ENCODE measurements at regions of chr16 and their contacts with region 1.

Region 1: GRCh38 chr16:57648590-57649442 is 19.3 kb upstream of the ADGRG3 start:
- DNase-seq: peak; percentile 93
- H3K4me3 ChIP-seq: peak overlapping the region in 1 of 2 experiments; percentile 52; a peak in 1 of 4 replicates
- H3K27ac ChIP-seq: no peak overlapping the region
- H3K4me1 ChIP-seq: peaks cover 0 to 4% of the 10 kb centered on the region in 2 experiments; a peak in 1 of 4 replicates
- H3K27me3 ChIP-seq: no peaks in the 10 kb centered on the region
- CTCF ChIP-seq: peak; percentile 100
- EP300 ChIP-seq: no peak
- RAD21 ChIP-seq: peak; percentile 96

Region 2: GRCh38 chr16:57300387-57301125 is 348.3 kb before region 1 on chr16:
- CTCF ChIA-PET with region 1: no interaction called
- POLR2A ChIA-PET with region 1: no interaction called
- DNase-seq: peak; percentile 93
- H3K4me3 ChIP-seq: peak overlapping the region; percentile 56 to 62
- H3K27ac ChIP-seq: peak overlapping the region; percentile 76 to 87
- H3K4me1 ChIP-seq: peaks cover 0 to 7% of the 10 kb centered on the region in 2 experiments; a peak in 1 of 4 replicates
- H3K27me3 ChIP-seq: no peaks in the 10 kb centered on the region
- CTCF ChIP-seq: peak; percentile 97
- EP300 ChIP-seq: no peak; a peak in 1 of 4 replicates
- RAD21 ChIP-seq: peak; percentile 100

Region 3: DNA sequence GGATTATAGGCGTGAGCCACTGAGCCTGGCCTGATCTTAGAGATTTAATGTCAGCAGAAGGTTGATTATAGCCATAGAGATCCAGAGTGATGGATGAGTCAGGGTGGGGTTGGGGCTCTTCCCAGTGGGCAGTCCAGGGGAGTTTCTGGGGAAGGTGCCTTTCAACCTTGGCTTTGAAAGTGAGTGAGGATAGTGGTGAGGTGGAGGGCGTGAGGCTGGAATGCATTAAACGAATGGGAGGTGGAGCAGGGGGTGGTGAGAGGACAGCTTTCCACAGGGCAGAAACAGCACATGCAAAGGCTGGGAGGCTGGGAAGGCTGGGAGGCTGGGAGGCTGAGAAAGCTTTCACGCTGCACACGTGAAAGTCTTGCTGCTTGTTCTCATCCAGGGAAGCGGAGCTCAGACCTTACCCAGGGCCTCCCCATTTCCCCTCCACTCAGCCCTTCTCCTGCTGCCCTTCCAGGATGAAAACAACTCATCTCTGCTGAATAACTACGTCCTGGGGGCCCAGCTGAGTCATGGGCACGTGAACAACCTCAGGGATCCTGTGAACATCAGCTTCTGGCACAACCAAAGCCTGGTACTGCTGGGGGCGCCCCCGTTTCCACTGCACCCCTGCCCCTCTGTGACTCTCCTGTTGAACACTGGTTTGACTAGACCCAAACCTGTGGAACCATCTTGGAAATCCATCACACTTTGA is 84.1 kb before region 1 on chr16:
- CTCF ChIA-PET with region 1: interaction called, 10 read pairs
- POLR2A ChIA-PET with region 1: no interaction called
- DNase-seq: no peak
- H3K4me3 ChIP-seq: no peak overlapping the region
- H3K27ac ChIP-seq: peak overlapping the region in 1 of 2 experiments; percentile 27; a peak in 2 of 4 replicates
- H3K4me1 ChIP-seq: no peaks in the 10 kb centered on the region; a peak in 2 of 4 replicates
- H3K27me3 ChIP-seq: no peaks in the 10 kb centered on the region
- CTCF ChIP-seq: no peak
- EP300 ChIP-seq: no peak
- RAD21 ChIP-seq: no peak

Region 4: GRCh38 chr16:57600048-57600835 is 48.6 kb before region 1 on chr16:
- CTCF ChIA-PET with region 1: interaction called, 95 read pairs
- POLR2A ChIA-PET with region 1: no interaction called
- DNase-seq: peak; percentile 67
- H3K4me3 ChIP-seq: no peak overlapping the region
- H3K27ac ChIP-seq: no peak overlapping the region
- H3K4me1 ChIP-seq: peaks cover 3% of the 10 kb centered on the region in 2 experiments; a peak in 1 of 4 replicates
- H3K27me3 ChIP-seq: no peaks in the 10 kb centered on the region
- CTCF ChIP-seq: peak; percentile 68
- EP300 ChIP-seq: no peak
- RAD21 ChIP-seq: peak; percentile 68

Region 5: DNA sequence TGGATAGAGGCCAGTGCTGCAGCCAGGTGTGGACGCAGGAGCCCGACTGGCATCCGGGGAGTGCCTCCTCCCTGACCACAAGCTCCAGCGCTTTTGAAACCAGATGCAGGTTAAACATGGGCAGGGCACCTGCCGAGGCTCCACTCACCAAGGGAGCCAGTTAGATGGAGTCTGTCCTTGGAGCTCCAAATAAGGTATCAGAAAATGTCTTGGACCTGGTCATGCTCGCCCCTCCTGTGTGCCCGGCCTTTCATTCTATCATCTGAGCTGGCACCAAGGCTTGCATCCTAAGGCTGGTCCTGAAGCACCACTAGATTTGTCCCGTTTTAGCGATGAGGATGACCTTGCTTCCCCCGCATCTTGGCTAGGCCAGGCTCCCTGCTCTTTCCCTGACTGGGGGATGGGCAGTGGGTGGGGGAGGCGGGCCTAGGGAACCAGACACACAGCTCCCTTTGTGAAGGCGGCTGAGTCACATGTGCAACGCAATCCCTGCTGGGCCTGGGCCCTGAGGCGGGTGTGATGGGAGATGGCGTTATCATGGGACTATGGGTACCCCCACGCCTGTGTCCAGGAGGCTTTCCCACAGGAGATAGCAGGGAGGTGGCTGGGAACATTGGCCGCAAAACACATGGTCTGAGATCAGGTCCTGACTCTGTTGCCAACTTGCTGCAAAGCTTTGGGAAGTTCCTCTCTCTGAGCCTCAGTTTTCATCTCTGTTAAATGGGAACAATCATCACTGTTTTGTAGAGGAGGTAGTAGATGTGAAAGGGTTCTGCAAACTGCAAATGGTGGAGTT is 25.4 kb before region 1 on chr16:
- CTCF ChIA-PET with region 1: interaction called, 30 read pairs
- POLR2A ChIA-PET with region 1: no interaction called
- DNase-seq: no peak
- H3K4me3 ChIP-seq: no peak overlapping the region
- H3K27ac ChIP-seq: no peak overlapping the region
- H3K4me1 ChIP-seq: peaks cover 8 to 28% of the 10 kb centered on the region in 2 experiments; a peak in 3 of 4 replicates
- H3K27me3 ChIP-seq: no peaks in the 10 kb centered on the region
- CTCF ChIP-seq: no peak
- EP300 ChIP-seq: no peak
- RAD21 ChIP-seq: no peak

Region 6: DNA sequence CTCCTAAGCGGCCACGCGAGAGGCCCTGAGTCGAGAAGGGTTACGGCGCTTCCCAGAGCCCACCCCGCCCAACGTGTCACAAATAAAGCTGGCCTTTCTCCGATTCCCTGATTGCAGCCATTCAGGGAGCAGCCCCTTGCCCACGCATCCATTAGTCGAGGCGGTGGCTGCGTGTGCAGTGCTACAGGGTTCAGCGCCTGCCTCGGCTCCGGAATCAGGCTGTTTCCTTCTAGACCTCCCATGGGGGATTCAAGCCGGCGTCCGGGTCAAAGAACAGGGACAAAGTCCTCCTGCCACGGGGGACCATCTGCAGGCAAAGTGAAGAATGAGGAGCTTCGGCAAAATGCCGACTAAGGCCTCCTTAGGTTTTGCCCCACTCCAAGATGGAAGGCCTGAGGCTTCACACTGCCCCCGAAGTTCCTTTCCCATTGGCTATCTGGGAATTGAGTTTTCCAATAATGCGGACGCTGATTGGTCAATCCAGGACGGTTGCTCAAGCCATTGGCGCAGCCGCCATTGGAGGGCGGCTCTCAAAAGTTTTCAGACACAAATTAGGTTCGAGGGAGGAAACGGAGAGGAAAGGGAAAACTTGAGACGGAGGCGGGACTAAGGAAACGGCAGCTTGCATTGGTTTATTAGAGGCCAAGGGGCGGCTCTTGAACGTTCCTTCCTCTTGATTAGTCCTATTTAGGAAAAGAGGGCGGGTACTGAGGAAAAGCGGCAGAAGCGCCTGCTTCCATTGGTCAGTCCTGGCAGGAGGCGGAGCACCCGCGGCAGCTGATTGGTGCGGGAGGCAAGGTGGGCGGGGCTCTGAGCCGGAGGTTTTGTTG is 86.3 kb after region 1 on chr16:
- CTCF ChIA-PET with region 1: interaction called, 16 read pairs
- POLR2A ChIA-PET with region 1: no interaction called
- DNase-seq: peak; percentile 98
- H3K4me3 ChIP-seq: peak overlapping the region; percentile 61 to 83
- H3K27ac ChIP-seq: peak overlapping the region; percentile 72 to 85
- H3K4me1 ChIP-seq: peaks cover 9 to 15% of the 10 kb centered on the region in 2 experiments; a peak in 2 of 4 replicates
- H3K27me3 ChIP-seq: no peaks in the 10 kb centered on the region
- CTCF ChIP-seq: no peak
- EP300 ChIP-seq: no peak
- RAD21 ChIP-seq: no peak

Region 7: GRCh38 chr16:57842606-57843005 is 193.8 kb after region 1 on chr16:
- CTCF ChIA-PET with region 1: no interaction called
- POLR2A ChIA-PET with region 1: no interaction called
- DNase-seq: no peak
- H3K4me3 ChIP-seq: no peak overlapping the region
- H3K27ac ChIP-seq: no peak overlapping the region
- H3K4me1 ChIP-seq: peaks cover 0 to 8% of the 10 kb centered on the region in 2 experiments; a peak in 1 of 4 replicates
- H3K27me3 ChIP-seq: no peaks in the 10 kb centered on the region
- CTCF ChIP-seq: no peak
- EP300 ChIP-seq: no peak
- RAD21 ChIP-seq: no peak